GM13977 (cell line): ENCODE measurements at regions of chr5 and their contacts with region 1.

Region 1: DNA sequence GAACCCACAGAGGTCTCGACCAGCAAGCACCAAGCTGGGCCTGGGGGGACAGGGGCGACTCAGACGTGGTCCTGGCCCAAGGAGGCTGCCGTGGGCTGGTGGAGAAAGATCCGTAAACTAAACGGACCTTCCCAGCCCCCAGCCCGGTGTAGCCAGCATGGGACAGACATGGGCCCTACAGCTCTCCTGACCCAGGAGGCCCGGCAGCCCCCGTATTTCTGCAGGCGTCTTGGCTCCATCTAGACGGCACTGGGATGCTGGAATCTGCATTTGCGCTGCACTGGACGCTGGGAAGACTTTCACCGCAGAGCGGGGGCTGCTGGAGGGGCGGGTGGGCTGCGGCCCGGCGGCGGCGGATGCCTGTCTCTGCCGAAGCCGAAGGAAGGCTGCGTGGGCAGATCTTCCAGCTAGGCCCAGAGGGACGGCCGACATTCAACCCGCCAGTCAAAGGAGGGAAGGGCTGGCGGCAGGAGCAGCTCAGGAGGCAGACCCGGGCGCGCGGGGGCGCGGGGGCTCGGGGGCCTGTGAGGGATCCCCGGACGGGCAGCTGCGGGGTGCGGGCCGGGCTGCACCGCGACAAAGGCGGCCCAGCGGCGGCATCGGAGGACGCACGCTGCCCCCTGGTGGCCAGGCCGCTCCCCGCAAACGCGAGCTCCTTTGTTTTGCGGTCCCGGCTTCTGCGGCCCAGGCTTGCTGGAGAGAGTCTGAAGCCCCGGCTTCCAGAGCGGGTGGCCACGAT is 266.2 kb downstream of the NSG2 start:
- DNase-seq: peak; percentile 87
- CTCF ChIP-seq: peak; percentile 95

Region 2: DNA sequence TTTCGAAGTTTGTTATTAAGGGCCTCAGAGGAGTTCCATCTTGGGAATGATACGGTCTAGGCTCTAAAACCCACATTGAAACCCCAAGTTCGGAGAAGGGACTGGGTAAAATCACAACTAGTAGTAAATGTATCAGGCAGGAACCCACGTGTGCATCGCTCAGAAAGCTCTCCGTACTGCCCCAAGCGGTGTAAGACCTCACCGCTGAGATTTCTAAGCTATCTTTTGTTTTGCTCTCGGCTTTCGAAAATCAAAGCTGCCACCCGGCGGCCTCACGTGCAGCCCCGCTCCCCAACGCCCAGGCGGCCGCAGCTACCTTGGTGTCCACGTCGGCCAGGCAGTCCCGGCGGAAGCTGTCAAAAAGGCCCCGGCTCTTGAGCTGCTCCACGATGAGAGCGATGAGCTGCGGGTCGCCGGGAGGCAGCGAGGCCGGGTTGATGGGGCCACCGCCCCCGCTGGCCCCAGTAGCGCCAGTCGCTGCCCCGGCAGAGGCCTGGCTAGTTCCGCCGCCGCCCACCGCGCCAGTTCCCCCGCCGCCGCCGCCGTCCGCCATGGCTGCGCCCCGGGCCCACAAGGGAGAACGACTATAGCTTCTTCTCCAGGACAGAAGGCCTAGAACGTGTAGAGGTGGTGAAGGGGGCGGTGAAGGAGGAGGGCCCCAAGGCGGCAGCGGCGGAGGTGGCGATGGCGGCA is 695.7 kb before region 1 on chr5:
- in situ Hi-C with region 1: loop called (anchors 25 kb)
- DNase-seq: peak; percentile 80
- CTCF ChIP-seq: peak; percentile 66

Region 3: DNA sequence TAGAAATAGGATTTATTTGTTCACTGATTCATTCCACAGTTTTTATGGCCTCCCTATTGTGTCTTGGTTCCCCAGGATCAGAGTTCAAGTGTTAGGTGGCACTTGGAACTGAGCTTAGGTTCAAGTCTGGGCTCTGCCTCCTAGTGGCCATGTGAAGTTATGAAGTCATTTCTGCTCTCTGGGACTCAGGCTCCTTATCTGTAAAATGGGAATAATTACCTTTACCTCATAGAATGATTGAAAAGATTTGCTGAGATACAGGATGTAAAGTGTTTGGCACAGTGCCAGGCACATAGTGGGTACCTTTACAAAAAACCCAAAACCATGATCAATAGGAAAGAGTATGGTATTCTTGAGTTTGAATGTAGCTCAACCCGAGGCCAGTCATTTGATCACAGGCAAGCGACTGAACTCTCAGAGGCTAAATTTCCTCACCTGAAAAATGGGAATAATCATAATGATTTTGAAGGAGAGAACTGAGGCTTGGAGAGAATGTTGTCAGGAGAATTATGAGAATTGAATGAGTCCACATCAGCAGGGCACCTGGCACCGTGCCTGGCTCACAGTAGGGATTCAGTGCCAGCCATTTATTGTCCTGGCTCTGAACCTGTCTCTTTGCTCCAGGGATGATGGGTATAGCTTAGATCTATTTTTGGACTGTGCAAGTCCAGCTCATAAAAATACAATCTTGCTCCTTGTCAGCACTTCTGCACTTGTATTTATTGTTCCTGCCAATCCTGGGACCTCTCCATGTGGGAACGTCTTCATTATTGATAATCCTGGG is 255.4 kb before region 1 on chr5:
- in situ Hi-C with region 1: loop called (anchors 25 kb)
- DNase-seq: no peak
- CTCF ChIP-seq: peak; percentile 47